GM12878 (cell line): ENCODE measurements at regions of chr4 and their contacts with region 1.

Region 1: GRCh38 chr4:100738196-100739170 is 220.7 kb upstream of the EMCN start:
- DNase-seq: no peak
- ATAC-seq: peak; percentile 81
- H3K4me3 ChIP-seq: no peak overlapping the region
- H3K27ac ChIP-seq: no peak overlapping the region
- H3K4me1 ChIP-seq: no peaks in the 10 kb centered on the region
- H3K27me3 ChIP-seq: no peaks in the 10 kb centered on the region
- CTCF ChIP-seq: no peak
- EP300 ChIP-seq: no peak
- POLR2A ChIP-seq: no peak
- RAD21 ChIP-seq: peak; percentile 17; the same call in 1 of the 2 replicates

Region 2: DNA sequence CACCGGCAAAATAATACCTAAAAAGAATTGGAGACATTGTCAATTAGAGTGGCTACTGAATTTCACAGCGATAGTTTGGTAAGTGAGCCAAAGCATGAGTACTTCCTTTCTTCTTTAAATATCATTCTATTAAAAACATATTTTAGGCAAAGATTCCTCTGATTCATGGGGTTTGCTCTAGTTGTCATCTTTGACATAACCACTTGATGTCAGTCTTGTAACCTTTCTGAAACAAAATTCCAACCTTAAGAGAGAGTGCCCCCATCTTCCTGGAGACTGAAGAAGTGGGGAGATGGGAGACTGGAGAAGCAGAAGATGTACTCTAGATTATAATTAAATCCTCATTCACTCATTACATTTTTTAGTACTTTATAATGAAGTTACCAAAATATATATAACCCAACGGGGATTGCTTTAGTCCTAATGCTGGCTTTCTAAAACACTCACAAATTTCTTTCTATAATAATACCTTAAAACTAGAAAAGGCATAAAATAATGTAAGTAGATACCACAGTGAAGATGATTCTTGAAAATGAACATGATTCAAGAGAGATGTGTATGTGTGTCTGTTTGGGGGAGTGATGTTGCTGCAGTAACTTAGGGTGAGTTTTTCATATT is 317.0 kb before region 1 on chr4:
- CTCF ChIA-PET with region 1: no interaction called
- POLR2A ChIA-PET with region 1: no interaction called
- RAD21 ChIA-PET with region 1: no interaction called
- SMC1A ChIA-PET with region 1: no interaction called
- in situ Hi-C with region 1: no loop called
- intact Hi-C with region 1: loop called (anchors 10 kb)
- DNase-seq: no peak
- ATAC-seq: no peak
- H3K4me3 ChIP-seq: no peak overlapping the region
- H3K27ac ChIP-seq: no peak overlapping the region
- H3K4me1 ChIP-seq: no peaks in the 10 kb centered on the region
- H3K27me3 ChIP-seq: no peaks in the 10 kb centered on the region
- CTCF ChIP-seq: peak; percentile 19 to 45 (median 29); a peak in 4 of 6 replicates
- EP300 ChIP-seq: no peak
- POLR2A ChIP-seq: no peak
- RAD21 ChIP-seq: peak; percentile 70

Region 3: DNA sequence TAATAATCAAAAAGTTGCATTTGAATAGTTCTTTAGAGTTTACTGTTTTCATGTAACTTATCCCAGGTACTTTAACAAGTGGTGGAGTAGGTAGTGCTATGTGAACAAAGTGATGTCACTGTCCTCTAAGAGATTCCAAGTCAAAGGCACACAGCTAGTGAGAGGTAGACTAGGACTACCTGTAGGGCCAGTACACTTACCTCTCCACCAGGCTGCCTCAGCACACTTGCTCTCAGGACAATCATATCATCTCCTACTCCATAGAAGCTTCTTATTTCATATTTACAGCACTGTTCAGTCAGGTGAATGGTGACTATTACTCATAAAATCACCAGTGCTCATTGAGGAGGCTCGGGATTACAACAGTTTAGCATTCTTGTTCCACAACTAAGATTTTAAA is 47.7 kb before region 1 on chr4:
- CTCF ChIA-PET with region 1: no interaction called
- POLR2A ChIA-PET with region 1: no interaction called
- RAD21 ChIA-PET with region 1: no interaction called
- SMC1A ChIA-PET with region 1: no interaction called
- in situ Hi-C with region 1: no loop called
- intact Hi-C with region 1: no loop called
- DNase-seq: no peak
- ATAC-seq: no peak
- H3K4me3 ChIP-seq: no peak overlapping the region
- H3K27ac ChIP-seq: no peak overlapping the region
- H3K4me1 ChIP-seq: no peaks in the 10 kb centered on the region
- H3K27me3 ChIP-seq: no peaks in the 10 kb centered on the region
- CTCF ChIP-seq: no peak
- EP300 ChIP-seq: no peak
- POLR2A ChIP-seq: no peak
- RAD21 ChIP-seq: no peak